ENCODE measurements at regions of chr2 and their contacts with region 1.

Region 1: DNA sequence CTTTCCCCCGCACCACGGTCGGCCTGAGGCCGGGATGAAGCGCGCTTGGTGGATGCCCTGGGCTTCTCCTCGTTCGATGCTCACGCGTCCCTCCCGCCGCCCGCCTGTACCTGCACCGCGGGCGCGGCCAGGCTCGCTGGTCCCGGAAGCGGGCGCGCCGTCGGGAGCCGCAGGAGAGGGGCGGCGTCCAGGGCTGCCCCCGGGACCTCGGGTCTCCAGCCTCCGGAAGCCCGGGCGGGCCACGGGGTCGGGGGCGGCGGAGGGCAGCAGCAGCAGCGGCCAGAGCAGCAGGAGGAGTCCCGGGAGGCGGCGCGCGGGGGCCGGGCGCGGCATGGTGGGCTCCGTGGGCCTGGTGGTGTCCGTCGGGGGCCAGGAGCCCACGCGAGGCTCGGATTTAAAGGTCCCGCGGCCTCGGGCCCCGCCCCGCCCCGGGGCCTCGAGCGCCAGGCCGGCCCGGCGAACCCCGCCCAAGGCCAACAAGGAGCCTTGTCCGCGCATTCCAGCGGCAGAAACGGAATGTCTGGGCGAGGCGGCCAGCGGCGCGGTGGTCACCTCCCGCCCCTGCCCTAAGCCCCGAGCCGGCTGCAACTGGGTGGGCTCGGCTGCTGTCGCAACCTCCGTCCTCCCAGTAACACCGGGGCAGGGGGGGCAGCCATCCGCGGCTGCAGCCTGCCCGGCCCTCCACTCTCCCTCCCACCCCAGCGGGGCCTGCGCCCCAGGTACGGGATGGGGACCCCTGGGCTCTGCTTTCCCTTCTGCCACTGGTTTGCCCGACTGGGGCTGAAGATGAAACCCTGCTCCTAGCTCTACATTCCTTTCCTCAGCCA is at the start of gene MATN3:
- DNase-seq: peak; percentile 63 to 87
- H3K4me3 ChIP-seq: peak within 1 kb of the TSS; percentile 54 to 65 (median 62)
- H3K27ac ChIP-seq: peak within 1 kb of the TSS in 4 of 5 donors; percentile 53 to 69 (median 58)
- H3K4me1 ChIP-seq: peaks cover 0 to 19% (median 17%) of the 10 kb centered on the region in 4 donors
- H3K27me3 ChIP-seq: peaks cover 0 to 28% (median 8%) of the 10 kb centered on the region in 3 donors
- CTCF ChIP-seq: no peak
- EP300 ChIP-seq: no peak
- POLR2A ChIP-seq: no peak
- total RNA-seq, gene MATN3: 0.58 to 7.0 (median 1.2) TPM in 3 of 5 donors, not detected in the others

Region 2: DNA sequence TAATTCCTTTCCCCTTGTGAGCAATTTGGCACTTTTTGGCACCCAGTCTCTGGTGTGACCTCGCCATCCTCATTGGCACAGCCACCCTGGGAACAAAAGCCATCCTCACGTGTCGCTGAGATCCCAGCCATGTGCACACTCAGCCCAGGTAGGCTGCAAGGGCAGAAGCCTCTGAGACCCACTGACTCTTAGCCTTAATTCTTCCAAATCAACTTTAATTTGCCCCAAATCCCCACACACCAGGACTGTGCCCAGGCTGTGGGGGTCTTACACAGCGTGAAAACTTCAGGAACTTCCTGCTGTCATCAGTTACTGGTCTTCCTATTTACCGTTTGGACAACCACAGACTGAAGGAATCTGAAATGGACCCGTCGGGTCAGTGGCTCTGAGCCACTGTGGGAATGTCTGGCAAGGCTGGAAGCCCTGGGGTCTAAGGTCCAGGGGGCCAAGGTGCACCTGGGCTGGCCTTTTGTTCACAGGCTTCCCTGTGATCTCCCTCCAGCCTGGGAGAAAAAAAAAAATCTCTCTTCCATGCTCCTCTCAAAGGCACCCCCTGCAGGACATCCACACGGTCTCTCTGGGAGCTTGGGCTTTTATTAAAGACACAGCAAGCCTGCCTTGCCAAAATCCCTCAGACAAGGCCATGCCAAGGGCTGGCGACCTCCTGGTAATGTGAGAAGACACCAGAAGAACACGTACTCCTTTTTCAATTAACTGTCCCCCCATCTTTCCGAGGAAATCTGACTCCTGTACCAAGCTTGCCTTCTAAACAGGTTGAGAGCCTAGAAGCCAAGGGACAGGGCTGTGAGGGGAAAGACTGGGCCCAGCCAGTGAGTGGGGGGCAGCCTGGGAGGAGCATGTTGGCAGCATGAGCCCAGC is 81.0 kb after region 1 on chr2:
- intact Hi-C with region 1: loop called (anchors 5 kb)
- DNase-seq: peak; percentile 69 to 89
- H3K4me3 ChIP-seq: no peak overlapping the region
- H3K27ac ChIP-seq: no peak overlapping the region
- H3K4me1 ChIP-seq: peaks cover 0 to 30% (median 11%) of the 10 kb centered on the region in 4 donors
- H3K27me3 ChIP-seq: no peaks in the 10 kb centered on the region
- CTCF ChIP-seq: peak in 5 of 7 experiments; percentile 16 to 67 (median 48)
- EP300 ChIP-seq: no peak
- POLR2A ChIP-seq: no peak

Region 3: DNA sequence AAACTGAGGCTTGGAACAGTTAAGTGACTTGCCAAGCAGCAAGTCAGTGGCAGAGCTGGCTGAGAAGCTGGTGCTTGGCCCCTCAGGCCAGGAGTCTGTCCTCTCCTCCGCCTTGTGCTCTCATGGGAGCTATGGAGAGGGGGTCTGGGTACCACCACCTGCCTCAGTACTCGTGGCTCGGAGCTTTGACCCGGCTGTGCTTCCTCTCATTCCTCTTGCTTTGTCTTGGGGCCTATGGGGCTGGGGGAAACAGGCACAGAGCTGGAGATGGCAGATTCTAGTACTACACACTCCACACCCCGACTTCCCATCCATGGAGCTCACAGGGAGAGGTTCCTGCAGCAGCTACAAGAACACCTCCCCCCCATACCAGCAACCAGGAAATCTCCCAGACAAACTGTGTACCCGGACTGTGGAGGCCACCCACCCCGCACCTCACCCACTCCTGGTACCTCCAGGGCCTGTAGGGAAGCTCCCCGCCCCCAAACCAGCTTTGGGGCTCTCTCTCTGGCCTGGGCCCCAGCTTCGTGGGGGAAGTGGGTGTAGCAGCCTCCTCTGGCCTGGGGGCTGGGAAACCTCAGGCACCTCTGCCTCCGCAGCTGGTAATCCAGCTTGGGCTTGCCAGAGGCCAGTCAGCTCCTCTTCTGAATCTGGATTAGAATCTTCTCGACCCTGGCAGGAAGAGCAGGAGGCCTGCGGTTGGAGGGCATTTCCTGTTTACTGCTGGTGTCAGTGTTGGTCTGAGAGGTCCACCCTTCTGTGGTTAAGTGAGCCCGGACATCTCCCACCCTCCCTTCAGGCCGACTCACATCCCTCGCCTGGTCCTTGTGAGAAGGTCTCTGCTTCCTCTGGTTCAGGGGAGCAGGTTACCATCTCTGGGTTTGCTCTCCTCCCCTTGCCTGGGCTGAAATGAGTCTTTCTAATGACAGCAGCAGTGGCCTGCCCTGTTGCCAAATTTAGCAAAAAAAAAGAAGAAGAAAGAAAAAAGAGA is 412.1 kb after region 1 on chr2:
- intact Hi-C with region 1: no loop called
- DNase-seq: peak; percentile 46 to 62
- H3K4me3 ChIP-seq: no peak overlapping the region
- H3K27ac ChIP-seq: peak overlapping the region; percentile 36 to 87 (median 76)
- H3K4me1 ChIP-seq: peaks cover 45 to 68% (median 61%) of the 10 kb centered on the region in 4 donors
- H3K27me3 ChIP-seq: no peaks in the 10 kb centered on the region
- CTCF ChIP-seq: no peak
- EP300 ChIP-seq: no peak
- POLR2A ChIP-seq: no peak